CD8-positive, alpha-beta T cell (primary cell): ENCODE measurements at regions of chr14 and their contacts with region 1.

Region 1: DNA sequence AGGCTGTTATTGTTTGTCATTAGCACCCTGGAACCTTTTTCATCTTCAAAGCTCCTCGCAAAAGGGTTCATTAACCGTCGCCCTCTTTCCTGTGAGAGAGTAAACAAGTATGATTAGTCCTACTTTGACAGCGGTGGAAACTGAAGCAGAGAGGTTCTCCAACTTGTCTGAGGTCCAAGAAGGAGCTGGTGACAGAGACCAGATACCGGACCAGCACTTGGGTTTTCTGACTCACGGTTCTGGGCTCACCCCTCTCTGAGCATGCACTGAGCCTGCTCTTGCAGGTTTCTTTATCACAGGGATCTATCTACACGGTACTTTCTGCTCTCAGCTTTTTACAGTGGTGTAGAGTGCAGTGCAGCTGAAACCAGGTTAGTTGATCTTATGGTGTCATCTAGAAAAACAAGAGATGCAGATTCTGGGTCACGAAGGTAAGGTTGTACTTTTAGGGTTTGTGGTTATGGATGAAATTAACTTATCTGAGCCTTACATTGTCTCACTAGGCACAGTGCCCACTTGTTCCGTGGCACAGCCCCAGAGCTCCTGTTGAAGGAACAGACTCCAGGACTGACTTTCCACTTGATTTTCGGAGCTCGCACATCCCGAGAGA is 62.1 kb downstream of the PPP2R5C start:
- DNase-seq: peak in 8 of 9 experiments; percentile 58 to 89 (median 75)
- ATAC-seq: peak; percentile 61
- H3K4me3 ChIP-seq: peak overlapping the region; percentile 60 to 61
- H3K4me3 Mint-ChIP-seq: peak overlapping the region; percentile 92
- H3K27ac ChIP-seq: peak overlapping the region; percentile 82 to 99
- H3K27ac Mint-ChIP-seq: peak overlapping the region; percentile 100
- H3K4me1 ChIP-seq: peaks cover 83% of the 10 kb centered on the region
- H3K4me1 Mint-ChIP-seq: peaks cover 86% of the 10 kb centered on the region
- H3K27me3 ChIP-seq: no peaks in the 10 kb centered on the region
- H3K27me3 Mint-ChIP-seq: no peaks in the 10 kb centered on the region
- CTCF ChIP-seq: no peak

Region 2: DNA sequence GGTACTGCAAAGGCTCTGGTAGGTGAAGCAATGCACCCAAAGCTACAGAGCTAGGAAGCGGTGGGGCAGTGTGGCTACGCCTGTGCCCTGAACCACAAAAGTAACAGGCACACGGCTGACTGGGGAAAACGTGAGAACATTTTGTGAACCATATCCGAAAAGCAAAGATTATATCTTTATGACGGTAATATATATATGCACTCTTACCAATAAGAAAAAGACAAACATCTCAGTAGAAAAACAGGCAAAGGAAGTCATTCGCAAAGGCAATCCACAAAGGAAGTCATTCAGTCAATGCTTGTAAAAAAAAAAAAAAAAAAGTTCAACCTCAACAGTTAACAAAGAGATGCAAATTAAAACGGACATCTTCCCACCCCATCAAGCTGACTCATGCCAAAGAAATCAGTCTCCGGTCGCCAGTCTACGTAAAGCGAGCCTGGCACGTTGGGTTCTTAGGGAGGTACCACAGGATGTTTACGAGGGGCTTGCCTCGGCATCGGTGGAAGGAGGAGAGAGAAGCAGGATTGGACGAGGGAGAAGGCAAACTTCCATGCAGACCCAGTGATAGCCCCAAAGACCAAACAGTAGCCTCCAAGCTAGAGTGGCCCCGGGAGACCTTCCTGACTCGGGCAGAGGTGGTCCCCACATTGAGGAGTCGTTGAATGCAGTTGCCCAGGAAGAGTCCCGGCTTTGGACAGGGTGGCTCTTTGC is 101.5 kb before region 1 on chr14:
- CTCF ChIA-PET with region 1: no interaction called
- POLR2A ChIA-PET with region 1: interaction called, 11 read pairs
- intact Hi-C with region 1: loop called in 1 of 2 experiments (anchors 1 kb)
- DNase-seq: peak; percentile 60 to 97 (median 79)
- ATAC-seq: peak; percentile 80
- H3K4me3 ChIP-seq: peak overlapping the region; percentile 27 to 42
- H3K4me3 Mint-ChIP-seq: peak overlapping the region; percentile 51
- H3K27ac ChIP-seq: peak overlapping the region; percentile 89 to 94
- H3K27ac Mint-ChIP-seq: peak overlapping the region; percentile 95
- H3K4me1 ChIP-seq: peaks cover 38% of the 10 kb centered on the region
- H3K4me1 Mint-ChIP-seq: peaks cover 57% of the 10 kb centered on the region
- H3K27me3 ChIP-seq: no peaks in the 10 kb centered on the region
- H3K27me3 Mint-ChIP-seq: no peaks in the 10 kb centered on the region
- CTCF ChIP-seq: no peak

Region 3: DNA sequence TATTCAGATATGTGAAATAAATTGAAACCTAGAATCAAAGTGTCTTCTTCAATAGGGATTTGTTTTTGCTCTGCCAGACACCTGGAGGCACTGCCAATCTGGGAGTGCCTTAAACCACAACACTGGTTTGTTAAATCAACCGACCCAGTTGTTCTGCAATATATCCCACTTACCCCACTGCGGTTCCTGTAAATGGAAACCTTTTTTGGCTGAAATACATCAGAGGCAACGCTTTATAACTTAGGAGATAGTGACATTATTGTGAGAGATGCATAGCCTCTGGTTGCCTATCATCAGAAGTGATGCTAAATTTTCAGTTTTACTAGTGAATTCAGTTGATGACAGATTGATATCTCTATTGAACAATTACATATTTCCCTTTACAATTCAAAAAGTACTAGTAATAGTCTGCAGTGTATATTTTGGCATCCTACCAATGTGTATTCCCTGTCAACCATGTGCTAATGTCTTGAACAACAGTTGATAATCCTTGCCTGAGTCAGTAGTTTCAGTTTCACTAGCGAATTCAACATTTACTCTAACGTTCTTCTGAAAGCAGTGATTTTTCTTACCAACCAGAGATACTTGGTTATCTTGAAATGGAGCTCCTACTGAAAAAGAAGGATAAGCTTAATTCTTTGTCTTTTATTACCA is 31.6 kb before region 1 on chr14:
- CTCF ChIA-PET with region 1: interaction called, 3 read pairs
- POLR2A ChIA-PET with region 1: interaction called, 9 read pairs
- intact Hi-C with region 1: loop called in 1 of 2 experiments (anchors 5 kb)
- DNase-seq: peak in 2 of 9 experiments; percentile 45 to 71
- ATAC-seq: peak; percentile 85
- H3K4me3 ChIP-seq: peak overlapping the region; percentile 14 to 30
- H3K4me3 Mint-ChIP-seq: peak overlapping the region; percentile 72
- H3K27ac ChIP-seq: peak overlapping the region; percentile 7 to 79
- H3K27ac Mint-ChIP-seq: peak overlapping the region; percentile 72
- H3K4me1 ChIP-seq: peaks cover 12% of the 10 kb centered on the region
- H3K4me1 Mint-ChIP-seq: peaks cover 24% of the 10 kb centered on the region
- H3K27me3 ChIP-seq: no peaks in the 10 kb centered on the region
- H3K27me3 Mint-ChIP-seq: no peaks in the 10 kb centered on the region
- CTCF ChIP-seq: no peak

Region 4: GRCh38 chr14:101843665-101844064 is 20.0 kb after region 1 on chr14:
- CTCF ChIA-PET with region 1: interaction called, 6 read pairs
- POLR2A ChIA-PET with region 1: interaction called, 12 read pairs
- intact Hi-C with region 1: loop called (anchors 1 to 2 kb)
- DNase-seq: peak in 8 of 9 experiments; percentile 24 to 89 (median 62)
- ATAC-seq: peak; percentile 70
- H3K4me3 ChIP-seq: no peak overlapping the region
- H3K4me3 Mint-ChIP-seq: peak overlapping the region; percentile 52
- H3K27ac ChIP-seq: peak overlapping the region in 1 of 2 experiments; percentile 21
- H3K27ac Mint-ChIP-seq: peak overlapping the region; percentile 90
- H3K4me1 ChIP-seq: peaks cover 67% of the 10 kb centered on the region
- H3K4me1 Mint-ChIP-seq: peaks cover 89% of the 10 kb centered on the region
- H3K27me3 ChIP-seq: no peaks in the 10 kb centered on the region
- H3K27me3 Mint-ChIP-seq: no peaks in the 10 kb centered on the region
- CTCF ChIP-seq: peak; percentile 72

Region 5: DNA sequence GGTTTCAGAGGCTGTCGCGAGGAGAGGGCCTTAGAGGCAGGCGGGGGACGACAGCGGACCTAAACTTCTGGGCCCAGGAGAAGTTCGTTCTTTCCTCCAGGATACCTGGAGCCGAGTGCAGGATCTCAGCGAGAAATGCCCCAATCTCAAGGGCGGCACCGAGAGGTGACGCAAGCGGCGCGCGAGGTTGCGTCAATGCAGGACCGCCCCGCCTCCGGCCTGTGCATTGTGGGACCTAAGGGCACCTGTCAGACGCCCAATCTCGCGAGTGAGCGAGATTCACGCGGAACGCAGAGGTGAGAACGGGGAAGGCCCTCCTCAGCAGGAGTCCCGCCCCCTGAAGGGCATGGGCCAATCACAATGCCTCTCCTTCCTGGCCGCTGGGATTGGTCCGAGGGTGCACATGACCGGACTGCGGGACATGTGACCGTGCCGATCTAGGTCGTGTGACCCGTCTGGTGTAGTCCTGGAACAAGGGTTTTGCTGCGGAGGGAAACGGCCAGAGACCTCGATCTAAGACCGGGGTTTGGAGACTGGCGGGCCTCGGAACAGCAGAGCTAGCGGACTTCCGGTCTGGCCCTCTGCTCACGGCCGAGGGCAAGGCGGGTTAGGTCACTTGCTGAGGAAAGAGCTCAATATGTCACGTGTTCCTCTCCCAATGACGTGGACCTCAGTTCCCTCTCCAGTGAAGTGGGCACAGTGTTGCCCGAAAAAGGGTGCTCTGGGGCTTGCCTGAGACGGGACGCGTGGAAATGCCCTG is 124.5 kb after region 1 on chr14:
- CTCF ChIA-PET with region 1: no interaction called
- POLR2A ChIA-PET with region 1: interaction called, 10 read pairs
- intact Hi-C with region 1: no loop called
- DNase-seq: peak; percentile 98 to 100 (median 99)
- ATAC-seq: peak; percentile 95
- H3K4me3 ChIP-seq: peak overlapping the region; percentile 81 to 82
- H3K4me3 Mint-ChIP-seq: peak overlapping the region; percentile 93
- H3K27ac ChIP-seq: peak overlapping the region; percentile 95 to 100
- H3K27ac Mint-ChIP-seq: peak overlapping the region; percentile 99
- H3K4me1 ChIP-seq: peaks cover 14% of the 10 kb centered on the region
- H3K4me1 Mint-ChIP-seq: peaks cover 20% of the 10 kb centered on the region
- H3K27me3 ChIP-seq: peaks cover 0 to 6% of the 10 kb centered on the region in 2 experiments
- H3K27me3 Mint-ChIP-seq: peaks cover 23% of the 10 kb centered on the region
- CTCF ChIP-seq: no peak